ENCODE measurements at regions of chr2 and their contacts with region 1.

Region 1: DNA sequence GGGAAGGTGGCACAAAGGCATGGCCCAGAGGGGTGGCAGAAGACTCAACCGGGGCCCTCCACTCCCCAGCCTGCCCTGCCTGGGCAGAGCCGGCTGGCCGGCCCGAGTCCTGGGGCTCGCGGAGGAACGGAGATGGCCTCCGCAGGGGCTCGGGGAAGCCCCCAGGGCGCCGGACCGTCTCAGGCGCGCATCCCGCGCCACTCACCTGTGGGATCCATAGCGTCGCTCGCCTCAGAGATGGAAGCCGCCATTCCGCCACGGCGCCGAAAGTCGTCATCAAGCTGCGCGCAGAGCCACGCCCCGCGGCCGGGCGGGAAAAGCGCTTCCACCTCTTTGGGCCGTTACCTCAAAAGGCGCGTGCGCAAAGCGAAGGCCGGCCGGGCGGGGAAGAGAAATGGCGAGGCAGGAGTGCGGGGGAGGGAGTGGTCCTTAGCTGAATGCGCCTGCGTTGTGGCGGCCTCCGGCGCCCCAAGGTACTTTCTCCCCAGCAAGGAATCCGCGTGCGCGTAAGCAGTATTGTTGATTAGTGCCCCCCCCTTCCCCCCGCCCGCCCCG is at the start of gene SMPD4:
- DNase-seq: peak; percentile 97
- H3K4me3 Mint-ChIP-seq: peak within 1 kb of the TSS; percentile 93
- H3K27ac Mint-ChIP-seq: peak within 1 kb of the TSS; percentile 92
- H3K4me1 Mint-ChIP-seq: no peaks in the 10 kb centered on the region
- H3K27me3 Mint-ChIP-seq: no peaks in the 10 kb centered on the region
- total RNA-seq, gene SMPD4: 92.3 and 99.0 TPM in 2 replicates

Region 2: GRCh38 chr2:129877289-129877779 is 304.1 kb before region 1 on chr2:
- intact Hi-C with region 1: loop called (anchors 5 kb)
- DNase-seq: peak; percentile 53
- H3K4me3 Mint-ChIP-seq: peak overlapping the region; percentile 88
- H3K27ac Mint-ChIP-seq: peak overlapping the region; percentile 74
- H3K4me1 Mint-ChIP-seq: peaks cover 9% of the 10 kb centered on the region
- H3K27me3 Mint-ChIP-seq: peaks cover 4% of the 10 kb centered on the region

Region 3: DNA sequence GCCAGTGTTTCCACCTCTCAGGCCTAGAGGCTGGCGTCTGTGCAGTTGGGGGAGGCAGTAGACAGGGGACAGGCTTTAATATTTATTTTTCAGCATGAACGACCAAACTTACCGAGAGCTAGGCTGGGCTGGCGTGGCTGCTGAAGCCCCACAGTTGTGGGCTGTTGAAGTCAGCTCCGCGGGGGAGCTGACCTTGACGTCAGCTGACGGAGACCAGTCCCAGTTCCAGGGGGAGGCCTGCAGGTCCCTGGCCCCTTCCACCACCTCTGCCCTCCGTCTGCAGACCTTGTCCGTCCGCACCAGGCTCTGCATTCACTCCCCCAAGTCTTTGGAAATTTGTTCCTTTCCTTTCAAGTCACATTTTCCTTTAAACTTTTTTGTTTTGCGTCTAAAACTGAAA is 50.3 kb after region 1 on chr2:
- intact Hi-C with region 1: loop called (anchors 1 kb)
- DNase-seq: no peak
- H3K4me3 Mint-ChIP-seq: no peak overlapping the region
- H3K27ac Mint-ChIP-seq: no peak overlapping the region
- H3K4me1 Mint-ChIP-seq: no peaks in the 10 kb centered on the region
- H3K27me3 Mint-ChIP-seq: peaks cover 3% of the 10 kb centered on the region

Region 4: DNA sequence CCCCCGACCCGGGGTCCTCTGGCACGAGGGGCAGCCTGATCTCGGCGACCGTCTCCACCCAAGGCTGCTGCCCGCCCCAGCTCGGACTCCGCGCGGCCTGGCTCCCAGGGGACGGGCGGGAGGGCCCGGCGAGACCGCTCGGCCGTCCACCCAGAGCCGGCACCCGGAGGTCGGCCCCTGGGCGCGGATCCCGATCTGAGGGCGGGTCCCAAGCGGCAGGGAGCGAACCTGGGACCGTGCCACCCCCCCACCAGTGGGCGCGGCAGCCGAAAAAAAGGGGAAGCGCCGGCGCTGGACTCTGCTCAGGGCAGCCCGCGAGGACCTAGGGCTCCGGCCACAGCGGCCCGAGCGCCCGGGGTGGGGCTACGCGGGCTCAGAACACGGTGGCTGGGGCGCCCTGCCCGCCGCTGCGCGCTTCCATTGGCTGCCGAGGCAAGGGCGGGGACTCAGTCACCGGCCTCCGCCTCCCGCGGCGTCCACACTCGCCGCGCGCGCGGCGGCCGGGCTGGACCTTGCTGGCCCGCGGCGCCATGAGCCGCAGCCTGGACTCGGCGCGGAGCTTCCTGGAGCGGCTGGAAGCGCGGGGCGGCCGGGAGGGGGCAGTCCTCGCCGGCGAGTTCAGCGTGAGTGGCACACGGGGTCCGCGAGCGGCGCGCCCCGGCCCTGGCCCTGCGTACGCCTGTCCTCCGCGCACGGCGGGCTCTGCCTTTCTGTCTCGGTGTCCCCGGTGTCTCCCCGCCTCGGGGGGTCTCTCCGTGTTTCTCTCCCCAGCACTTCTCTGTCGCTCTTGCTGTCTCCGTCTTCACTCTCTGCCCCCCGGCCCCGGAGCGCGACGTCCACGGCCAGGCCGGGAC is 174.4 kb after region 1 on chr2 and contains the start of gene PTPN18:
- intact Hi-C with region 1: loop called (anchors 1 kb)
- DNase-seq: peak; percentile 67
- H3K4me3 Mint-ChIP-seq: peak within 1 kb of the TSS; percentile 83
- H3K27ac Mint-ChIP-seq: peak within 1 kb of the TSS; percentile 52
- H3K4me1 Mint-ChIP-seq: peaks cover 25% of the 10 kb centered on the region
- H3K27me3 Mint-ChIP-seq: no peaks in the 10 kb centered on the region
- total RNA-seq, gene PTPN18: 66.9 and 68.9 TPM in 2 replicates

Region 5: DNA sequence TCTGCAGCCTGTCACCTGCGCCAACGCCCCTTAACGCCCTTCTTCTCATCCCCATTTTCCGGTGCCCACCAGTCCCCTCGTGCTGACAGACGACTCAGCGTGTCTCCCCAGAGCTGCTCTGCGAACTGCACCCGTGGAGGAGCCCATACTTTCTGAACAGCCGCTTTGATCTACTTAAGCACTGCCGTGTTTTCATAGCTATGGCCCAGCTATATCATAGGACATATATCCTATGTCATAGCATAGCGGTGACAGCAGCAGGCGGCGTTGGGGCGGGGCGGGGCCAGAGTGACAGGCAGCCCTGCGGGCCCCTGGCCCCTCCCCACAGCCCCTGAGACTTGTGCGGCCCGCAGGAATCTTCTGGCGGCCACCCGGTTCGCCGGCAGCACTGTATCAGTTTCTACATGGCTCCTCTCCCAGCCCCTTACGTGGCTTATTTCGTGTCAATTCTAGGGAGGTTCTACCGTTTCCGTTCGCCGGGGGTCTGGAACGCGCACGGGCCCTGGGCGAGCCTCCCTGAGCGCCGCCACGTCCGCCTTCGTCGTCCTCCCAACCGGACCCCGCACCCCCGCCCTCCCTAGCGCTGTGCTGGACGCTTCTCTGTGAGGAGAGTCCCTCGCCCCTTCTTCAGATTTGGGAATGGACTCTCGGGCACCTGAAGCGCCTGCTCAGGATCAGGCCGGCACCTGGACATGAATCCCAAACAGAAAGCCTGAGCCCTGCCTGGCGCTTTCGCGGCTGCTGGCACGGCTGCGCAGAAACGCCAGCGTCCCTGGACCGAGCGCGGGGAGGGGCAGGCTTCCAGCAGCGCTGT is 209.9 kb after region 1 on chr2:
- intact Hi-C with region 1: loop called (anchors 5 kb)
- DNase-seq: peak; percentile 68
- H3K4me3 Mint-ChIP-seq: peak overlapping the region; percentile 93
- H3K27ac Mint-ChIP-seq: peak overlapping the region; percentile 93
- H3K4me1 Mint-ChIP-seq: peaks cover 19% of the 10 kb centered on the region
- H3K27me3 Mint-ChIP-seq: peaks cover 12% of the 10 kb centered on the region

Measured in activated T-helper 1 cell treated with anti-CD3 and anti-CD28 coated beads, Interleukin-12 subunit alpha, Interleukin-12 subunit beta, Interleukin-2, Interleukin-4 antibody, amounts not matched to agents 30 ng/mL and 10 ng/mL and 1 ng/mL, durations not matched to agents 14 hours and 24 hours and 36 hours (primary cell).